MCF 10A (cell line): ENCODE measurements at regions of chr5 and their contacts with region 1.

Region 1: GRCh38 chr5:73638344-73639095 is 12.5 kb downstream of the ARHGEF28 start:
- DNase-seq: peak; percentile 52
- H3K4me3 Mint-ChIP-seq: peak overlapping the region; percentile 33
- H3K27ac Mint-ChIP-seq: peak overlapping the region; percentile 87
- H3K4me1 Mint-ChIP-seq: peaks cover 45% of the 10 kb centered on the region
- H3K27me3 Mint-ChIP-seq: no peaks in the 10 kb centered on the region
- CTCF ChIP-seq: no peak

Region 2: DNA sequence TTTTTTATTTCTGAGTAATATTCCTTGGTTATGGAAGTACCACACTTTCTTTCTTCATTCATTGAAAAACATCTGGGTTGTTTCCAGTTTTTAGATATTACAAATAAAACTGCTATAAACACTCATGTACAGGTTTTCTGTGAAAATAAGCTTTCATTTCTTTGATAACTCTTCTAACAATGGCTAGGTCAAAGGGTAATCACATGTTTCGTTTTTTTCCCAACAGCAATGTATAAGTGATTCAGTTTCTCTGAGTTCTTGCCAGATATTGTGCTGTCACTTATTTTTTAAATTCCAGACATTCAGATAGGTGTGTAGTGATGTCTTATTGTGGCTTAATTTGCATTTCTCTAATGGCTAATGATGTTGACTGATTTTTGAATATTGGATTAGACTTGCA is 838.8 kb before region 1 on chr5:
- CTCF ChIA-PET with region 1: no interaction called
- POLR2A ChIA-PET with region 1: no interaction called
- intact Hi-C with region 1: no loop called
- DNase-seq: no peak
- H3K4me3 Mint-ChIP-seq: no peak overlapping the region
- H3K27ac Mint-ChIP-seq: no peak overlapping the region
- H3K4me1 Mint-ChIP-seq: no peaks in the 10 kb centered on the region
- H3K27me3 Mint-ChIP-seq: no peaks in the 10 kb centered on the region
- CTCF ChIP-seq: no peak

Region 3: DNA sequence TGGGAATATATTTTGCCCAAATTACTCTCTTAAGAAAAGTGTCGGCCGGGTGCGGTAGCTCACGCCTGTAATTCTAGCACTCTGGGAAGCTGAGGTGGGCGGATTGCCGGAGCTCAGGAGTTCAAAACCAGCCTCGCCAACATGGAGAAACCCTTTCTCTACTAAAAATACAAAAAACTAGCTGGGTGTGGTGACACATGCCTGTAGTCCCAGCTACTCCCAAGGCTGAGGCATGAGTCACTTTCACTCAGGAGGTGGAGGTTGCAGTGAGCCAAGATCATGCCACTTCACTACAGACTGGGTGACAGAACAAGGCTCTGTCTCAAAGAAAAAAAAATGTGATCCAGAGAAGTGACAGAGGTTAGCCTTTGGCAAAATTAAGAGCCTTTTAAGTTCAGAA is 544.6 kb before region 1 on chr5:
- CTCF ChIA-PET with region 1: no interaction called
- POLR2A ChIA-PET with region 1: no interaction called
- intact Hi-C with region 1: no loop called
- DNase-seq: peak; percentile 81
- H3K4me3 Mint-ChIP-seq: peak overlapping the region; percentile 51
- H3K27ac Mint-ChIP-seq: peak overlapping the region; percentile 90
- H3K4me1 Mint-ChIP-seq: peaks cover 8% of the 10 kb centered on the region
- H3K27me3 Mint-ChIP-seq: no peaks in the 10 kb centered on the region
- CTCF ChIP-seq: no peak

Region 4: DNA sequence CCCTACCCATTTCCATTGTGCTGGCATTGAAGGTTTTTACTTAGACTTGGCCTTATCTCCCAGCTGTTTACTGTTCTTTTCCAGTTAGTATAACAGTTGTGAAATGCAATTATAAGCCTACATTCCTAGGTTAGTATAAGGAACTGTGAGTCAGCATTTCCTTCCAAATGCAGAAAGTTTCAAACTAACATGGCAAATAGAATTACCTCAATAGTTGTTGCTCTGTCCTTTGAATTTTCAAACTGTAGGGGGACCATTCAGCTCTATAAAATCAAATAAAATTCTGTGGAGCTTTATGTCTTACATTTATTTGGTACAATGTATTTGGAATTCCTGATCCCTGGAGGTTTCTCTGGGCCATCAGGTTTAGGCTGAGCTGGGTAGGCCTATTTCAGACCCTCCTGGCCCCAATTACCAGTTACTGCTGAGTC is 34.7 kb after region 1 on chr5:
- CTCF ChIA-PET with region 1: no interaction called
- POLR2A ChIA-PET with region 1: interaction called, 22 read pairs
- intact Hi-C with region 1: no loop called
- DNase-seq: peak; percentile 70
- H3K4me3 Mint-ChIP-seq: no peak overlapping the region
- H3K27ac Mint-ChIP-seq: peak overlapping the region; percentile 96
- H3K4me1 Mint-ChIP-seq: peaks cover 34% of the 10 kb centered on the region
- H3K27me3 Mint-ChIP-seq: no peaks in the 10 kb centered on the region
- CTCF ChIP-seq: no peak

Region 5: GRCh38 chr5:73856997-73857396 is 218.5 kb after region 1 on chr5:
- CTCF ChIA-PET with region 1: no interaction called
- POLR2A ChIA-PET with region 1: no interaction called
- intact Hi-C with region 1: no loop called
- DNase-seq: no peak
- H3K4me3 Mint-ChIP-seq: no peak overlapping the region
- H3K27ac Mint-ChIP-seq: no peak overlapping the region
- H3K4me1 Mint-ChIP-seq: peaks cover 10% of the 10 kb centered on the region
- H3K27me3 Mint-ChIP-seq: no peaks in the 10 kb centered on the region
- CTCF ChIP-seq: no peak